MCF 10A (cell line): ENCODE measurements at regions of chr3 and their contacts with region 1.

Region 1: GRCh38 chr3:180782195-180782984 is 103.1 kb upstream of the CCDC39 start:
- DNase-seq: peak; percentile 13
- H3K4me3 Mint-ChIP-seq: no peak overlapping the region
- H3K27ac Mint-ChIP-seq: no peak overlapping the region
- H3K4me1 Mint-ChIP-seq: no peaks in the 10 kb centered on the region
- H3K27me3 Mint-ChIP-seq: no peaks in the 10 kb centered on the region
- CTCF ChIP-seq: peak; percentile 40

Region 2: DNA sequence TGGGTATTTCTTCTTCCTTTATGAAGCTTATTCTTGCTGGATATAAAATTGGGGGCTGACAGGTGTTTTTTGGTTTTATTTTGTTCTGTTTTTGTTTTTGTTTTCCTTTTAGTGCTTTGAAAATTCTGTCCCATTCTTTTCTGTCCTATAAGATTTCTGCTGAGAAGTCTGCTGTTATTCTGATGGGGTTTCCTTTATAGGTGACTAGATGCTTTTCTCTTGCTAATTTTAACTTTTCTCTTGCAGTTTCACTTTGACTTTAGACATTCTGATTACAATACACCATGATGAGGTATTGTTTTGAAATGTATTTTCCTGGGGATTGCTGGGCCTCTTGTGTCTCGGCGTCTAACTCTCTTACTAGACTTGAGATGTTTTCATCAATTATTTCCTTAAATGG is 157.7 kb before region 1 on chr3:
- CTCF ChIA-PET with region 1: no interaction called
- POLR2A ChIA-PET with region 1: no interaction called
- intact Hi-C with region 1: no loop called
- DNase-seq: no peak
- H3K4me3 Mint-ChIP-seq: no peak overlapping the region
- H3K27ac Mint-ChIP-seq: no peak overlapping the region
- H3K4me1 Mint-ChIP-seq: no peaks in the 10 kb centered on the region
- H3K27me3 Mint-ChIP-seq: no peaks in the 10 kb centered on the region
- CTCF ChIP-seq: no peak

Region 3: GRCh38 chr3:180684807-180685206 is 97.6 kb before region 1 on chr3:
- CTCF ChIA-PET with region 1: interaction called, 89 read pairs
- POLR2A ChIA-PET with region 1: interaction called, 6 read pairs
- intact Hi-C with region 1: loop called (anchors 1 kb)
- DNase-seq: no peak
- H3K4me3 Mint-ChIP-seq: no peak overlapping the region
- H3K27ac Mint-ChIP-seq: no peak overlapping the region
- H3K4me1 Mint-ChIP-seq: no peaks in the 10 kb centered on the region
- H3K27me3 Mint-ChIP-seq: no peaks in the 10 kb centered on the region
- CTCF ChIP-seq: no peak

Region 4: GRCh38 chr3:180926526-180926925 is 144.1 kb after region 1 on chr3:
- CTCF ChIA-PET with region 1: no interaction called
- POLR2A ChIA-PET with region 1: no interaction called
- intact Hi-C with region 1: no loop called
- DNase-seq: no peak
- H3K4me3 Mint-ChIP-seq: no peak overlapping the region
- H3K27ac Mint-ChIP-seq: no peak overlapping the region
- H3K4me1 Mint-ChIP-seq: peaks cover 6% of the 10 kb centered on the region
- H3K27me3 Mint-ChIP-seq: no peaks in the 10 kb centered on the region
- CTCF ChIP-seq: no peak